ENCODE measurements at regions of chr5 and their contacts with region 1.

Region 1: GRCh38 chr5:116532762-116533525 is 41.7 kb downstream of the SEMA6A start:
- DNase-seq: peak; percentile 61
- H3K4me3 ChIP-seq: no peak overlapping the region
- H3K4me3 Mint-ChIP-seq: no peak overlapping the region
- H3K27ac Mint-ChIP-seq: no peak overlapping the region
- H3K4me1 ChIP-seq: peaks cover 70% of the 10 kb centered on the region
- H3K4me1 Mint-ChIP-seq: peaks cover 28% of the 10 kb centered on the region
- H3K27me3 ChIP-seq: no peaks in the 10 kb centered on the region
- H3K27me3 Mint-ChIP-seq: no peaks in the 10 kb centered on the region
- CTCF ChIP-seq: no peak

Region 2: GRCh38 chr5:116472277-116472676 is 60.7 kb before region 1 on chr5:
- CTCF ChIA-PET with region 1: no interaction called
- POLR2A ChIA-PET with region 1: no interaction called
- intact Hi-C with region 1: loop called (anchors 5 kb)
- DNase-seq: peak in 1 of 2 experiments; percentile 10
- H3K4me3 ChIP-seq: no peak overlapping the region
- H3K4me3 Mint-ChIP-seq: no peak overlapping the region
- H3K27ac Mint-ChIP-seq: no peak overlapping the region
- H3K4me1 ChIP-seq: no peaks in the 10 kb centered on the region
- H3K4me1 Mint-ChIP-seq: peaks cover 6% of the 10 kb centered on the region
- H3K27me3 ChIP-seq: no peaks in the 10 kb centered on the region
- H3K27me3 Mint-ChIP-seq: no peaks in the 10 kb centered on the region
- CTCF ChIP-seq: peak; percentile 17 to 39

Region 3: GRCh38 chr5:116546033-116546728 is 13.2 kb after region 1 on chr5:
- CTCF ChIA-PET with region 1: interaction called, 4 read pairs
- POLR2A ChIA-PET with region 1: interaction called, 3 read pairs
- intact Hi-C with region 1: loop called (anchors 1 kb)
- DNase-seq: peak; percentile 82 to 91
- H3K4me3 ChIP-seq: no peak overlapping the region
- H3K4me3 Mint-ChIP-seq: peak overlapping the region; percentile 16
- H3K27ac Mint-ChIP-seq: peak overlapping the region; percentile 38
- H3K4me1 ChIP-seq: peaks cover 46% of the 10 kb centered on the region
- H3K4me1 Mint-ChIP-seq: peaks cover 33% of the 10 kb centered on the region
- H3K27me3 ChIP-seq: no peaks in the 10 kb centered on the region
- H3K27me3 Mint-ChIP-seq: no peaks in the 10 kb centered on the region
- CTCF ChIP-seq: no peak